Activated CD8-positive, alpha-beta T cell treated with anti-CD3 and anti-CD28 coated beads, Interleukin-2, amount 10 ng/mL, durations not matched to agents 7 days and 5 days (primary cell): ENCODE measurements at regions of chr1 and their contacts with region 1.

Region 1: GRCh38 chr1:221203224-221204054 is 324.2 kb downstream of the HLX start:
- DNase-seq: peak; percentile 75
- ATAC-seq: peak; percentile 57
- H3K4me3 Mint-ChIP-seq: no peak overlapping the region
- H3K27ac Mint-ChIP-seq: no peak overlapping the region
- H3K4me1 Mint-ChIP-seq: no peaks in the 10 kb centered on the region
- H3K27me3 Mint-ChIP-seq: no peaks in the 10 kb centered on the region

Region 2: DNA sequence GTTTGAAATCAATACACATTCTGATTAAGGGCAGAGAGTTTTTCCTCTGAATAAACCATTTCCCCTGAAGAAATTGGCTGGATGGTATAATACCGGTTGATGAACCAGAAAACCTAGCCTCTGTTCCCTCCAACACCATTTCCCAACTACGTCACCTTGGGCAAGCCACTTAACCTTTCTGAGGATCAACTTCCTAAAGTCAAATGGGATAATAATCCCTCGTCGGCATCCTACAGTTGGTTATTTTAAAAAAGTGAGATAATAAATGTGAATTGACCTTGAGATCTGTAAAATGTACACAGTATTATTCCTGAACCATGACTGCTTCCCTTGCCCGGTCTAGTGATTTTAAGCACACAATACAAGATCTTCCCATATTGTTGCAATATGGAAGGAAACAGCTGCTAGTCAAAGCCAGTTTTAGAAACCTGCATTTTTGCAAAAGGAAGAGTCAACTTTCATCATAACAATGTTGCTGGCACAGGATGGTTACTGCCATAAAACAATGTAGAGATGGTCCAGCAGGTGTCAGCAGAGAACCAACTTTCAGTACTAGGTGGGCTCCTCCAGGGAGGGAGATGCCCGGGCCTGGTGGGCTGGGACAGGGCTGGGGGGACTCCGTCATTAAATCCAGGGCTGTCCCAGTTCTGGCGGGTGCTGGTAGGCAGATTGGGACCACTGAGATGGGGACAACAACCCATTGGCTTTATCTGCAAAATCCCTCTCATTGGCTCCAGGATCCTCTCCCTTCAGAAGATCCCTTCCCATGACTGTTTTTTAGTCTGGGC is 329.4 kb before region 1 on chr1:
- CTCF ChIA-PET with region 1: interaction called, 20 read pairs
- POLR2A ChIA-PET with region 1: no interaction called
- DNase-seq: peak; percentile 45
- ATAC-seq: no peak
- H3K4me3 Mint-ChIP-seq: no peak overlapping the region
- H3K27ac Mint-ChIP-seq: no peak overlapping the region
- H3K4me1 Mint-ChIP-seq: peaks cover 24% of the 10 kb centered on the region
- H3K27me3 Mint-ChIP-seq: peaks cover 44% of the 10 kb centered on the region

Region 3: GRCh38 chr1:221435504-221435904 is 232.1 kb after region 1 on chr1:
- CTCF ChIA-PET with region 1: interaction called, 10 read pairs
- POLR2A ChIA-PET with region 1: no interaction called
- DNase-seq: no peak
- ATAC-seq: peak; percentile 59
- H3K4me3 Mint-ChIP-seq: no peak overlapping the region
- H3K27ac Mint-ChIP-seq: no peak overlapping the region
- H3K4me1 Mint-ChIP-seq: peaks cover 21% of the 10 kb centered on the region
- H3K27me3 Mint-ChIP-seq: peaks cover 7% of the 10 kb centered on the region